ENCODE measurements at regions of chr1 and their contacts with region 1.

Region 1: DNA sequence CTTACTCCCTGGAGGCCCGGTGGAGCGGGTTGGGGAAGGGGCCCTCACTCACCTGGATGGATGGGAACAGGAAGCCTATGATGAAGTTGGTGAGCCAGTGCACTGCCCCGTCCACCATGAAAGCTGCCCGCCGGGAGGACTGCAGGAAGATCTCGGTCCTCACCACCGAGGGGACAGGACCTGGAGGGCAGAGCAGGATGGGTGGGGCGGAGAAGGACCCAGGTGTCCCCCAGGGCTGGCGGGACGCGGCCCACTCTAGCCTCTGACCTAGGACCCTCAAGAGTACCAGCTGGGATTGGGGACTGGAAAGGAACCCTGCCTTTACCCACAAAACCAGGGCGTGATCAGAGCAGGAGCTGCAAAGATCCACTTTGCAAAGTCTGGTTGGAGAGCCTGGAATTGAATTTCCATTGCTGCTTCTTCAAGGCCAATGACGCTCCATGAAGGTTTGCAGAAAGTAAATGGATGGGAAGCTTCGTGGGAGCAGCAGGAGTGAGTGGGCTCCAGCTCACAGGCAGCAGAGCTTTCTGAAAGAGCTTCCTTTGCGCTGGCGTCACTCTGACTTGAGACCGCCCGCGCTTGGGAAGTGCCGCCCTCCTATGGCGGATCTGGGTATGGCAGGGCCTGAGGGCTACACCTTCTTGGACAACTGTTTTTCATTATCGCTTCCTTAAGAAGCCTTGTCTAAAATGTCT is 21.4 kb downstream of the SLC2A7 start:
- DNase-seq: peak; percentile 91
- H3K4me3 Mint-ChIP-seq: peak overlapping the region; percentile 50
- H3K27ac Mint-ChIP-seq: peak overlapping the region; percentile 75
- H3K4me1 Mint-ChIP-seq: peaks cover 13% of the 10 kb centered on the region
- H3K27me3 Mint-ChIP-seq: peaks cover 35% of the 10 kb centered on the region

Region 2: GRCh38 chr1:8439015-8439702 is 565.7 kb before region 1 on chr1:
- CTCF ChIA-PET with region 1: no interaction called
- DNase-seq: no peak
- H3K4me3 Mint-ChIP-seq: no peak overlapping the region
- H3K27ac Mint-ChIP-seq: peak overlapping the region; percentile 9
- H3K4me1 Mint-ChIP-seq: peaks cover 7% of the 10 kb centered on the region
- H3K27me3 Mint-ChIP-seq: no peaks in the 10 kb centered on the region

Region 3: DNA sequence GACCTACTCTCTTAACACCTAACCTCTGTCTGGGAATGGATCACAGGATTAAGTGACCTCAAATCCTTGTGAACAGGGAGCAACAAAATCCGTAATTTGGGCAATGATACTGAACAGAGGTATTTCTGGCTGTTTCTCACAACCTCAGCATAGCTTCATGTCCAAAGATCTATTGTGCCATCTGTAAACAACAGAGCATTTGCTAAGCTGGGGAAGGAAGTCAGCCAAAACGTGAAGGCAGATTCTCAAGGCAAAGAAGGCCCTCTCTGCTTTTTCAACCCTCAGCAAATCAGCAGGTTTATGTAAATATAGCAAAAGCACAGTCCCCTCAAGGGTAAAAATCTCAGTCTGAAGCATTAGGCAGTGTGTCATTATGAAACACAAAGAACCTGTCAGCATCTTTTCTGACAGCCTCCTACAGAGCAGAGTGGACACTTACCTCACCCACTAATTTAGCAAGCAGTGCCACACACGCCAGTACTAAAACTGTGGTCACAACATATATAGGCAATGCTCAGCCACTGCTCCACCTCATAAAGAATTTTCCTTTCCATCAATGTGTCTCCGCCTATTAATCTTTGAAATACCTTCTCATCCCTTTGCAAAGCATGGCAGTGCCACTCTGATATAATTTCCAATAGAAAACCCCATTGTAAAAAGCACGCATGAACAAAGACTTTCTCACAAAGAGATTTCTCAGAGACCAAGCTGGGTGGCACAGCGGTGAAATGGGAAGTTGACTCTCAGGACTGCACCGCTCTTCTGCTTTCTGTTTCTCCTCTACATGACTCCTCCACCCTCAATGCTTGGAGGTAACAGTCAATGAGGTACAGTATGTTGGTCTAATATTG is 375.4 kb before region 1 on chr1:
- CTCF ChIA-PET with region 1: no interaction called
- DNase-seq: no peak
- H3K4me3 Mint-ChIP-seq: no peak overlapping the region
- H3K27ac Mint-ChIP-seq: peak overlapping the region; percentile 3
- H3K4me1 Mint-ChIP-seq: peaks cover 42% of the 10 kb centered on the region
- H3K27me3 Mint-ChIP-seq: no peaks in the 10 kb centered on the region

Region 4: DNA sequence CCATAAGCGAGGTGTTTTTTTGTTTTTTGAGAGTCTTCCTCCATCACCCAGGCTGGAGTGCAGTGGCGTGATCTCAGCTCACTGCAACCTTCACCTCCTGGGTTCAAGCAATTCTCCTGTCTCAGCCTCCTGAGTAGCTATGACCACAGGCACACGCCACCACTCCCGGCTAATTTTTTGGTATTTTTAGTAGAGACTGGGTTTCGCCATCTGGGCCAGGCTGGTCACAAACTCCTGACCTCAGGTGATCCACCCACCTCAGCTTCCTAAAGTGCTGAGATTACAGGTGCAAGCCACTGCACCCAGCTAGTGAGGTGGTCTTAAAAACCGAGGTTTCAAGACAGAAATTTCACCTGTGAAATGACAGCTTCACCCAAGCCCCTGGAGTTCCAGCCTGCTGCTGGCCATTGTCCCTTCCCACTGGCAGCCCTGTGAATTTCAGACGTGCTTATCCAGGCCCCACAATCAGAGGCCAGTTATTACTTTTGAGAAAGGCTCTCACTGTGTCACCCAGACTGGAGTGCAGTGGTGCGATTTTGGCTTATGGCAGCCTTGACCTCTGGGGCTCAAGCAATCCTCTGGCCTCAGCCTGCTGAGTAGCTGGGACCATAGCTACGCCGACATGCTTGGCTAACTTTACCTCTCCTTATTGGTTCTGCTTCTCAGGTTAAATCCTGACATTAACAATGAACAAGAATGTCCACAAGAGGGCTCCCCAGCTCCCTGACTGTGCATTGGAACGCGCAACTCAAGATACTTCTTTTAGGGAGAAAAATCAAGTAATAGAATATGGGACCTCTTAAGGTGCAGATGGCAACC is 145.8 kb before region 1 on chr1:
- CTCF ChIA-PET with region 1: interaction called, 28 read pairs
- DNase-seq: peak; percentile 67
- H3K4me3 Mint-ChIP-seq: no peak overlapping the region
- H3K27ac Mint-ChIP-seq: peak overlapping the region; percentile 78
- H3K4me1 Mint-ChIP-seq: peaks cover 52% of the 10 kb centered on the region
- H3K27me3 Mint-ChIP-seq: no peaks in the 10 kb centered on the region

Region 5: DNA sequence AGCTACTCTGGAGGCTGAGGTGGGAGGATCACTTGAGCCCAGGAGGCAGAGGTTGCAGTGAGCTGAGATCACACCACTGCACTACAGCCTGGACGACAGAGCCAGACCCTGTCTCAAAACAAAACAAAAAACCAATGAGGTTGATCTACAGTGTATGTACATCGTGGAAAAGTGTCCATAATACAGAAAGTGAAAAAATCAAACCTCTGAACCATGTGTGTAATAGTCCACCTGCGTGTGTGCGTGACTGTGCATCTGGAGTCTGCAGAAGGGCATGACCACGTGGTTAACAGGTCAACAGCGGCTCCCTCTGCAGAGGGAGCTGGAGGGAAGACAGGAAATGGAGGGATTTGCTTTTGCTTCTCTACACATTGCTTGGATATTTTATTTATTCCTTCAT is 93.9 kb before region 1 on chr1:
- CTCF ChIA-PET with region 1: interaction called, 37 read pairs
- DNase-seq: no peak
- H3K4me3 Mint-ChIP-seq: no peak overlapping the region
- H3K27ac Mint-ChIP-seq: no peak overlapping the region
- H3K4me1 Mint-ChIP-seq: peaks cover 31% of the 10 kb centered on the region
- H3K27me3 Mint-ChIP-seq: peaks cover 11% of the 10 kb centered on the region

Region 6: DNA sequence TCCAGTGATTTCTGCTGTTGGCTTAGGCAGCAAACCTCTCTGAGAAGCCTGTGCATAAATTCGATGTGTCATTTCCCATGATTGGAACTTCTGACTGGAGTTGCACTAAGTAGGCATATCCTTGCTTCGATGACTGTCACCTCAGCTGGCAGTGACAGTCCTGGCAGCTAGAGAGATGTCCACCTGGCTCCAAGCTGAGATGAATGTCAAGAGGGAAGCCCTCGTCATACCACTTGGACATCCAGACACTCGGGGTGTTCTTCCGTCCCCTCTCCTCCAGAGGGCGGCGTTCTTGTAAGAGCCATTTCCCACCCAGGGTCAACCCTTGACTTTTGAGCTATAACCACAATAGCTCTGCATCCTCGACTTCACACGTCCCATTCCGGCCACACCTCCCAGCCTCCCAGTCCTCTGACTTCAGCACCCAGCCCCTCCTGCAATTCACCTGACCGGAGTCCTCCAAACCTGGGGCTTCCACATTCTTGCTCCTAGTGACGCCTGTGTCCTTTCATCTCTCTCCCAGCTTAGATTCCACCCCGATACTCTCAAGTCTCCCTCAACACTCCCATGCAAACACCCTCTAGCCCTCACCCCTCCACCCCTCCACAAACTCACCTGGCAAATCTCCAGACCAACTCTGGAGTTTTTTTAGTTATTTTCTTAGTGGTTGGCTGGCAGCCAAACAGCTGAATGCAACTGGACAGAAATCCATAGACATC is 41.9 kb before region 1 on chr1:
- CTCF ChIA-PET with region 1: interaction called, 21 read pairs
- DNase-seq: peak; percentile 66
- H3K4me3 Mint-ChIP-seq: peak overlapping the region; percentile 62
- H3K27ac Mint-ChIP-seq: peak overlapping the region; percentile 84
- H3K4me1 Mint-ChIP-seq: peaks cover 94% of the 10 kb centered on the region
- H3K27me3 Mint-ChIP-seq: no peaks in the 10 kb centered on the region

Region 7: GRCh38 chr1:8970870-8971337 is 33.9 kb before region 1 on chr1:
- CTCF ChIA-PET with region 1: interaction called, 11 read pairs
- DNase-seq: peak; percentile 75
- H3K4me3 Mint-ChIP-seq: peak overlapping the region; percentile 99
- H3K27ac Mint-ChIP-seq: peak overlapping the region; percentile 96
- H3K4me1 Mint-ChIP-seq: peaks cover 47% of the 10 kb centered on the region
- H3K27me3 Mint-ChIP-seq: no peaks in the 10 kb centered on the region

Region 8: DNA sequence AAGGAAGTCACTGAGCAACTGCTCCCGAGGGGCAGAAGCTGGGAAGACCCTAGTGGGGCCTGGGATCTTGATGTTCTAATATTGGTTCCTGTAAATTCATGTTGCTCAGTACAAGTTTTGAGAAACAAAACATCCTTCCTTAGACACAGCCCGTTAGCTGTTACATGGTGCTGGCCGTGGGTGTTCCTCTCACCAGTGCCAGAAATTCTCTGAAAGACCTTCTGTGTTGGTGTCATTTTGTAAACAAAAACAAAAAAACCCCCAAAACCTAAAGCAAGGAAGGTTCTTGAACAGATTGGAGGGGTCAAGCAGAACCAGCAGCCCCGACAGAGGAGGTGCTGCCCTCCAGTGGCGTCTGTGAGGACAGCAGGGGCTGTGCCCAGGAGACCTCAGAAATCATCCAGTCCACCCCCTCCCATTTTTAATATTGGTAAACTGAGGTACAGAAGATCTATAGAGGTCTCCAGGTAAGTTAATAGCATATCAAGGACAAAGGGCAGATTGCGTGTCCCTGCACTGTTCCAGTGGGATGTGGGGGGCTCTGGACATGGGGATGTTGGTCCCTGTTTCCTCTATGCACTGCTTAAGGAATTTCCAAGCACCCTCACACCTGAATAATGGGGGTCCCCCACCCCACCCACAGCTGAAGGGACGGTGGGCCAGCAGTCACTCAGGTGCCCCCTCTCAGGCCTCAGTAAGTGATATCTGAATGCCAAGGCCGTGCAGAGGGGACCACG is 16.8 kb before region 1 on chr1:
- CTCF ChIA-PET with region 1: interaction called, 77 read pairs
- DNase-seq: peak; percentile 80
- H3K4me3 Mint-ChIP-seq: peak overlapping the region; percentile 63
- H3K27ac Mint-ChIP-seq: peak overlapping the region; percentile 95
- H3K4me1 Mint-ChIP-seq: peaks cover 74% of the 10 kb centered on the region
- H3K27me3 Mint-ChIP-seq: no peaks in the 10 kb centered on the region

Region 9: DNA sequence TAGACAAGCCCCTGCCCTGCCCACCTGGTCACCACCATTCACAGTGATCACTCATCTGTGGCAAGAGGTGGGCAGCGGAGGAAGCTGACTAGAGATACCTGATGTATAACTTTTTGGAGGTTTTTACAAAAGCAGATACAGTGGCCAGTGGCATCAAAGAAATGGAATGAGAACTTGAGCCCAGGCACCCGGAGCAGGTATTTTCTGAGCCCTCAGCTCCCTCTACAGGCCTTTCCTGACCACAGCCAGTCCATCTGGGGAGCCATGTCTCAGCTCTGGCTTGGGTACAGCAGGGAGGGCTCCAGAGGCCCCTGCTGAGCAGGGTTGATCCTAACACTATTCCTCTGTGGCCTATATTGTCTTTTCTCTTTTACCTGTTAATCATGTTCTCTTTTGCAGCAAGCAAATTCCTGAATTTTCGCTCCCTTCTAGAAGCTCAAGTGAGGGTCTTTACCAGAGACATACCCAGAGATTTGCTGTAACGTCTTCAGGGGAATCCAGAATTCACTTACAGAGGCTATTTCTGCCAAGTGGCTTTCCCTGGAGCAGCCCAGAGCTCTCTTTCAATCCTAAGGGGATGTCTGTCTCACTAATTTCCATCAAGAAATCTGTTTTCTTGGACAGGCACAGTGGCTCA is 96.8 kb after region 1 on chr1:
- CTCF ChIA-PET with region 1: interaction called, 82 read pairs
- DNase-seq: peak; percentile 63
- H3K4me3 Mint-ChIP-seq: no peak overlapping the region
- H3K27ac Mint-ChIP-seq: peak overlapping the region; percentile 45
- H3K4me1 Mint-ChIP-seq: no peaks in the 10 kb centered on the region
- H3K27me3 Mint-ChIP-seq: peaks cover 4% of the 10 kb centered on the region

Measured in activated naive CD4-positive, alpha-beta T cell treated with anti-CD3 and anti-CD28 coated beads, Interleukin-2, amount 10 ng/mL, durations not matched to agents 7 days and 5 days (primary cell).